Naive thymus-derived CD4-positive, alpha-beta T cell (primary cell): ENCODE measurements at regions of chr13 and their contacts with region 1.

Region 1: GRCh38 chr13:74133657-74134201 is 475 bp downstream of the KLF12 start:
- DNase-seq: peak; percentile 69 to 97 (median 93)
- ATAC-seq: peak; percentile 72
- H3K4me3 ChIP-seq: peak overlapping the region; percentile 86
- H3K4me3 Mint-ChIP-seq: peak overlapping the region in 8 of 10 donors; percentile 92 to 100 (median 97)
- H3K27ac ChIP-seq: peak overlapping the region; percentile 98
- H3K27ac Mint-ChIP-seq: peak overlapping the region; percentile 97 to 100 (median 99)
- H3K4me1 ChIP-seq: peaks cover 24 to 39% of the 10 kb centered on the region in 2 donors
- H3K4me1 Mint-ChIP-seq: peaks cover 14 to 38% (median 37%) of the 10 kb centered on the region in 7 donors
- H3K27me3 ChIP-seq: no peaks in the 10 kb centered on the region
- H3K27me3 Mint-ChIP-seq: peaks cover 0 to 5% (median 0%) of the 10 kb centered on the region in 5 donors

Region 2: DNA sequence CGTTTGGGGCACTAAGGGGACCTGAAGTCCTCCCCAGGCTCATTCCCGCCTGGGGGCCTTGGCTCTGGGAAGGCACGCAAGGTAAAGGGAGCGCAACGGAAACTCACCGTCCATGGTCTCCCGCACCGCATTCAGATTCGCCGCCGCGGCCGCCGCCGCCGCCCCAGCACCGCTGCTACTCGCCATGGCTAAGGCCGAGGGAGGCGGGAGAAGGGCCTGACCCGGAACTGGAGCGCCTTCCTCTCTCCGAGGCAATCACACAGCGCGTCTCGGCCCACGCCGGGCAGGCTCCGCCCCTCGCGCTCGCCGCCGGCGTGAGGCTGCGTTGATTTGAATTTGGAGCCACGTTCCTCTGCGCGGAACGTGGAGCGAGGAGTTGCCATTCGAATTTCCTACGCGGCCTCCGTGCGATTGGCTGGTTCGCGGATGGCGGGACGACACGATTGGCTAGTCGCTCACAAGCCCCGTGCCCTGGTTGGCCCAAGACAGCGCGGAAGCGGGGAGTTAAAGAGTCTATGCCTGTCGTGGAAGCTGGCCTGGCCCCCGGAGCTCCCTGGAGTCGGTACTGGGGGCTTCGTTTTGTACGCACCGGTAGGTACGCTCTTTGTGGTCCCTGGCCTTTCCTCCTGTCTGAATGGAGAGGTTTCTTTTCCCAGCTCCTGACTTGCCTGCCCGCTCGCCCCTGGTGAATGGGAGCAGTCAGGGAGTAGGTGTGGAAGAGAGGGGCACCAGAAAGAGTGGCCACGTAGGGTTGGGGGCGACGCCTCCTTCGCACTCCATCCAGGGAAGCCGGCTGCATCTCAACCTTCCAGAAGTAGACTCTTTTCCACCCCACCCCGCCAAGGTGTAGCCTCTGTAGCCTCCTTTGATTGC is 1406.1 kb before region 1 on chr13 and contains the starts of genes BORA and MZT1:
- CTCF ChIA-PET with region 1: no interaction called
- POLR2A ChIA-PET with region 1: no interaction called
- intact Hi-C with region 1: loop called in 1 of 2 experiments (anchors 1 kb)
- DNase-seq: peak; percentile 87 to 95 (median 94)
- ATAC-seq: peak; percentile 95
- H3K4me3 ChIP-seq: peak within 1 kb of the TSS; percentile 93
- H3K4me3 Mint-ChIP-seq: peak within 1 kb of the TSS; percentile 85 to 99 (median 95)
- H3K27ac ChIP-seq: peak within 1 kb of the TSS; percentile 73
- H3K27ac Mint-ChIP-seq: peak within 1 kb of the TSS; percentile 85 to 95 (median 91)
- H3K4me1 ChIP-seq: peaks cover 23 to 30% of the 10 kb centered on the region in 2 donors
- H3K4me1 Mint-ChIP-seq: peaks cover 30 to 69% (median 54%) of the 10 kb centered on the region in 7 donors
- H3K27me3 ChIP-seq: no peaks in the 10 kb centered on the region
- H3K27me3 Mint-ChIP-seq: no peaks in the 10 kb centered on the region
- total RNA-seq, gene BORA: 4.7 to 18.0 (median 6.2) TPM
- total RNA-seq, gene MZT1: 4.5 to 14.9 (median 6.3) TPM

Region 3: DNA sequence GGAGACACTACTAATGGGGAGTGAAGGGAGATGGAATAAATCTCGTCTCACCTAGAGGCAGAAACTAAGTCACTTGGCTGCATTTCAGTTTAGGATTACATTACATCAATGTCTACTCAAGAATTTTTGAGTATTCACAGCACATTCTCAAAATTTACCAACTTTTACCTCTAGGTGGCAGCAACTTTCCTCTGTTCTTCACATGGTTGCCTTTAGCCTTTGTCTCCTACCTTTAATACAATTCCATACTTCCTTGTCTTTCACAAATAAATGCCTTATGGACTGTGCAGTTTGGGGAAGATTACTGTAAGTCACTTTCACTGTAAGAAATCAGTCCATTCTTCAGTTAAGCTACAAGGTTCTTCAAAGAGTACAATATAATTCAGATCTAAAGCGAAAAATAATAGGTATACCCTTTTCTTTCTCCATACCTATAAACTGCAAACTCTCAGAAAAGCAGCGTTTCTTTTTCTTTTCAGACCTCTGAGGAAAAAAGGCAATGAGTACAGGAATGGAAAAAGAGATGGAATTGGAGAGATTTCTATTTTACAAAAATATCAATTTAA is 378.9 kb before region 1 on chr13:
- CTCF ChIA-PET with region 1: no interaction called
- POLR2A ChIA-PET with region 1: interaction called, 4 read pairs
- intact Hi-C with region 1: loop called in 1 of 2 experiments (anchors 1 kb)
- DNase-seq: peak in 7 of 9 donors; percentile 32 to 69 (median 59)
- ATAC-seq: peak; percentile 67
- H3K4me3 ChIP-seq: no peak overlapping the region
- H3K4me3 Mint-ChIP-seq: peak overlapping the region in 1 of 10 donors; percentile 5
- H3K27ac ChIP-seq: no peak overlapping the region
- H3K27ac Mint-ChIP-seq: peak overlapping the region; percentile 11 to 96 (median 79)
- H3K4me1 ChIP-seq: peaks cover 0 to 19% of the 10 kb centered on the region in 2 donors
- H3K4me1 Mint-ChIP-seq: peaks cover 13 to 76% (median 57%) of the 10 kb centered on the region in 7 donors
- H3K27me3 ChIP-seq: no peaks in the 10 kb centered on the region
- H3K27me3 Mint-ChIP-seq: no peaks in the 10 kb centered on the region

Region 4: DNA sequence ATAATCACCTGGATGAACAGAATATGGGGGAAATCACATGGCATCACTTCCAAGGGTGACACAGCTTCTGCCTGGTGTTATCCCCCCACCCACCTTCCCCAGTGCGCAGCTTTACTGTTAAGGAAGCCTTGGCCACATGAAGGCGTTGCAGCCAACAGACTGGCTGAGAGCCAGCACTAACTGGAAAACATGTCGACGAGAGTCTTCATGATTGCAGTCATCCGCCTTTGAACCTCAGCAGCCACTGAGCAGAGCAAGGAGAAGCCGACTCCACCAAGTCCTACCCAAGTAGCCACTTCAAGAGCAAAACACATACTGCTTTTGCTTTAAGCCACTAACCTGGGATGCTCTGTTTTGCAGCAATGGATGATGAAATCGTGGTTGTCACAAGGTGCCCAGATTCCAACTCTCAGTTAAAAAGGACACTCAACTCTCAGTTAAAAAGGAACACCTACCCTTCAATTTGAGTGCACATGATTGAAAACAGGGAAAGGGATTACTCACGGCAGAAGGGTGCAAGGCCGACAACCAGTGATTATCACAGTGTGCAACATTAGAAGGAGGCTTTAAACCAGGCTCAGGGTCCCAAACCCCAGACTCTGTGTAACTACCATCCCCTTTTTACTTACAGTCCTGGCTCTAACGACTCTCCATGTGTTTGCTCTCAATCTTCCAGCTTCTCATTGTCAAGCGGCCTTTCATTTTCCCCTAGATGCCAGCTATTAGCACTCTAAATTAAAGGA is 148.6 kb before region 1 on chr13:
- CTCF ChIA-PET with region 1: interaction called, 4 read pairs
- POLR2A ChIA-PET with region 1: interaction called, 33 read pairs
- intact Hi-C with region 1: loop called (anchors 1 kb)
- DNase-seq: peak; percentile 48 to 95 (median 91)
- ATAC-seq: peak; percentile 94
- H3K4me3 ChIP-seq: peak overlapping the region; percentile 14
- H3K4me3 Mint-ChIP-seq: peak overlapping the region in 9 of 10 donors; percentile 67 to 89 (median 78)
- H3K27ac ChIP-seq: peak overlapping the region; percentile 82
- H3K27ac Mint-ChIP-seq: peak overlapping the region in 1 of 9 donors; percentile 80
- H3K4me1 ChIP-seq: peaks cover 28 to 52% of the 10 kb centered on the region in 2 donors
- H3K4me1 Mint-ChIP-seq: peaks cover 28 to 54% (median 44%) of the 10 kb centered on the region in 7 donors
- H3K27me3 ChIP-seq: no peaks in the 10 kb centered on the region
- H3K27me3 Mint-ChIP-seq: no peaks in the 10 kb centered on the region

Region 5: DNA sequence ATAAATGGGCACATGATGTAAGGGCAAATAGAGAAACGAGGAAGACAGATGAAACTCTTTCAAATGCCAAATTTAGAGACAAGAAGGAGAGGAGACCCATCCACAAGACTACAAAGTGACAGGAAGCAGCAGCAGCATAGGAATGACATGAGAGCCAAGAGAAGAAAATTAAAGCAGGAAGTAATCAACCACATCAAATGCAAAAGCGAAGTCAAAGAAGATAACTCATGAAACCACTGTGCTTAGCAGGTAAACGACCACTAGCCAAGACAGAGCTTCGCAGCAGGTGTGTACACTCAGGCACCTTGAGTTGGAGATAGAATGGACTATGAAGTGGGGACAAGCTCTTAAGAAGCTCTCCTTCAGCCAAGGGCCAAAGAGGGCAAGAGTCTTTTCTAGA is 63.7 kb before region 1 on chr13:
- CTCF ChIA-PET with region 1: no interaction called
- POLR2A ChIA-PET with region 1: interaction called, 10 read pairs
- intact Hi-C with region 1: loop called (anchors 1 to 2 kb)
- DNase-seq: peak in 7 of 9 donors; percentile 59 to 82 (median 79)
- ATAC-seq: peak; percentile 85
- H3K4me3 ChIP-seq: peak overlapping the region; percentile 32
- H3K4me3 Mint-ChIP-seq: peak overlapping the region; percentile 58 to 88 (median 74)
- H3K27ac ChIP-seq: no peak overlapping the region
- H3K27ac Mint-ChIP-seq: peak overlapping the region; percentile 56 to 93 (median 83)
- H3K4me1 ChIP-seq: peaks cover 46 to 51% of the 10 kb centered on the region in 2 donors
- H3K4me1 Mint-ChIP-seq: peaks cover 49 to 90% (median 83%) of the 10 kb centered on the region in 7 donors
- H3K27me3 ChIP-seq: no peaks in the 10 kb centered on the region
- H3K27me3 Mint-ChIP-seq: no peaks in the 10 kb centered on the region

Region 6: DNA sequence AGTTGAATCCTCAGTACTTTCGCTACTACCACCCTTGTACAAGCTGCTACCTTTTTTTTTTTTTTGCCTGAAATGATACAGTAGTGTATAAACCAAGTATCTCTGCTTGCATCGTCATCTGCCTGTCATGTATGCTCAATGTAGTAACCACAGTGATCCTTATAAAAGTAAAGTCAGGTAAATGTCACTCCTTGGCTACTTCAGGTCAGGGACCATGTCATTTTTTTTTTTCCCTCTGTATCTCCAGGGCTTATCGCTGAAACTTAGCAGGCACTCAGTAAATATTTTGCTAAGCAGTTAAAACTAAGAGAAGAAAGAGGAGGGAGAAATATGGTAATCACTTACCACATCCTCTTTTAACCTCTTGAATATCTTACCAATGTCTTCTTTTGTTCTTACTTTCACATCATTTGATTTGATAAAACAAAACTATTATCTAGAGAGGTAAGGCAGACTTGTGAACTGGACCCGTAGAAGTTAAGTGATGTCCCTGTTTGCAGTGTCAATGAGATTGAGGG is 97.3 kb after region 1 on chr13:
- CTCF ChIA-PET with region 1: interaction called, 3 read pairs
- POLR2A ChIA-PET with region 1: interaction called, 42 read pairs
- intact Hi-C with region 1: loop called (anchors 1 kb)
- DNase-seq: peak in 7 of 9 donors; percentile 37 to 78 (median 69)
- ATAC-seq: peak; percentile 85
- H3K4me3 ChIP-seq: peak overlapping the region; percentile 61
- H3K4me3 Mint-ChIP-seq: peak overlapping the region; percentile 72 to 87 (median 84)
- H3K27ac ChIP-seq: peak overlapping the region; percentile 70
- H3K27ac Mint-ChIP-seq: peak overlapping the region; percentile 86 to 97 (median 90)
- H3K4me1 ChIP-seq: peaks cover 0 to 29% of the 10 kb centered on the region in 2 donors
- H3K4me1 Mint-ChIP-seq: peaks cover 8 to 62% (median 52%) of the 10 kb centered on the region in 7 donors
- H3K27me3 ChIP-seq: no peaks in the 10 kb centered on the region
- H3K27me3 Mint-ChIP-seq: no peaks in the 10 kb centered on the region

Region 7: DNA sequence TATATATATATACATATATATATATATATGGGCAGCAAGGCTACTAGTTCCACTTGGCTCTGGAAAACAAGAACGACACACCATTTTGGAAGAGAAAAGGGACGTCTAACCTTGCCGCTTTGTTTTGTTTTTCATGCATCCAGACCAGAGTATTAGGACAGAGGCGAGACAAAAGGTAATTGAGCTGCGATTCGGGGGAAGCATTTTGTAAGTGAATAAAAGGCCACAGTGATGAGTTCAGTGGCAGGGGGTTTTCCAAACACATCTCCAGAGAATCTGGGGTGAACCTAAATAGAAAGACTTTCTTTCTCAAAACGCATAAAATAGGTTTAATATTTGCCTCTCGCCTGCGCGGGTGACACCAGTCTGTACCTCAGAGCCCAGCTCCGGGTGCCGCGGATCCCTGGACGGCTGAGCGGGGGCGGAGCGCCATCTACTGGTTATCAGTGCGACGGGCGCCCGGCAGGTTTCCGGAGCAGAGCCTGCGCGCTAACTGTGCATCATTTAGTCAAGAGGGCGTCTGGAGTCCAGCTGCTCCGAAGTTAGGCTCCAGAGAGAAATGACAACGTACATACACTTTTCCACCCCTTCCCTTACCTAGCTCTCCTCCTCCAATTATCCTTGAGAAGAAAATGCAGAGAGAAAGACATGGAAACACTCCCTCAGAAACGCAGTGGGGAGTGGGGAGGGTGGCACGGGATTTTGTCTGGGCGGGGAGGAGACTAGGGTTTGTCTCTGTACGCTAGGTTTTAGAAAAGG is 1085.9 kb after region 1 on chr13:
- CTCF ChIA-PET with region 1: no interaction called
- POLR2A ChIA-PET with region 1: no interaction called
- intact Hi-C with region 1: loop called (anchors 2 to 5 kb)
- DNase-seq: peak; percentile 67 to 87 (median 79)
- ATAC-seq: peak; percentile 96
- H3K4me3 ChIP-seq: no peak overlapping the region
- H3K4me3 Mint-ChIP-seq: peak overlapping the region; percentile 28 to 77 (median 58)
- H3K27ac ChIP-seq: no peak overlapping the region
- H3K27ac Mint-ChIP-seq: peak overlapping the region in 2 of 9 donors; percentile 34 to 87
- H3K4me1 ChIP-seq: peaks cover 0 to 4% of the 10 kb centered on the region in 2 donors
- H3K4me1 Mint-ChIP-seq: peaks cover 6 to 7% (median 7%) of the 10 kb centered on the region in 7 donors
- H3K27me3 ChIP-seq: no peaks in the 10 kb centered on the region
- H3K27me3 Mint-ChIP-seq: peaks cover 15 to 48% (median 27%) of the 10 kb centered on the region in 5 donors